ENCODE measurements at regions of chr16 and their contacts with region 1.

Region 1: GRCh38 chr16:6081320-6081976 is 983.9 kb upstream of the EEF2KMT start:
- DNase-seq: peak; percentile 15 to 86
- H3K4me3 ChIP-seq: no peak overlapping the region
- H3K27ac ChIP-seq: no peak overlapping the region
- H3K4me1 ChIP-seq: peaks cover 0 to 2% (median under 1%) of the 10 kb centered on the region in 4 experiments; a peak in 2 of 7 replicates
- H3K27me3 ChIP-seq: no peaks in the 10 kb centered on the region
- CTCF ChIP-seq: peak; percentile 17 to 85 (median 76)
- EP300 ChIP-seq: no peak
- POLR2A ChIP-seq: no peak
- RAD21 ChIP-seq: peak; percentile 84 to 87

Region 2: GRCh38 chr16:5837007-5837670 is 244.3 kb before region 1 on chr16:
- CTCF ChIA-PET with region 1: no interaction called
- POLR2A ChIA-PET with region 1: no interaction called
- DNase-seq: no peak
- H3K4me3 ChIP-seq: no peak overlapping the region
- H3K27ac ChIP-seq: no peak overlapping the region
- H3K4me1 ChIP-seq: peaks cover 0 to 2% (median 1%) of the 10 kb centered on the region in 4 experiments; a peak in 2 of 7 replicates
- H3K27me3 ChIP-seq: no peaks in the 10 kb centered on the region
- CTCF ChIP-seq: no peak
- EP300 ChIP-seq: no peak
- POLR2A ChIP-seq: no peak
- RAD21 ChIP-seq: no peak

Region 3: DNA sequence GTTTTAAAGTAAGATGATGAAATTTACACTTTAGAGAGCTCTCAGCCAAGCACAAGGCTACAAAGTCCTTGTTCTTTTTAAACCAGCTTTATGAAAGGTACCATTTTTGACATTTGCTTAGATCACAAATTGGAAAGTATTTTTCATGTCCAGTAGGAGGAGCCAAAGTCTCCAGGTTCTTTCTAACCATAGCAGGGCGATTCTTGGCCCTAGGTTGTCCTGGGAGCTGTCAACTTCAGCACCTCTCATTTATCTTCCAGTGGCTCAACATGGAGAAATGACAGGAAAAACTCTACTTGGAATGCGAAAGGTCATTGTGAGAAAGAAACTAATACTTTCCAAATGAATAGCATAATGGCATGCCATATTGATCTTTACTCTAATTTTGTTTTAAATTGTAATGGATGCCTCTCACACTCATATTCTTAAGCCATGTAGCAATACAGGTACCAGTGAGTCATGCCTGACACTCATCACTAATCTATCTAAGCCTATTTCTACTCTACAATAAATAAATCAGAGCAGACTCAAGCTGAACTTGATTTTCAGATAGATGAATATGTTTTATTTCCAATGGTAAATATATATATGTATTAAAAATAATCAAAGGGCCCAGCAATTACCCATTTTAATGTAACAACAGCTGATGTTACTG is 64.8 kb before region 1 on chr16:
- CTCF ChIA-PET with region 1: interaction called, 11 read pairs
- POLR2A ChIA-PET with region 1: no interaction called
- DNase-seq: no peak
- H3K4me3 ChIP-seq: no peak overlapping the region
- H3K27ac ChIP-seq: no peak overlapping the region
- H3K4me1 ChIP-seq: peaks cover 0 to 4% (median under 1%) of the 10 kb centered on the region in 4 experiments; a peak in 3 of 7 replicates
- H3K27me3 ChIP-seq: peaks cover 20 to 40% (median 36%) of the 10 kb centered on the region in 4 experiments
- CTCF ChIP-seq: peak in 2 of 3 experiments; percentile 69 to 74; a peak in 3 of 4 replicates
- EP300 ChIP-seq: no peak
- POLR2A ChIP-seq: no peak
- RAD21 ChIP-seq: peak; percentile 77 to 85

Region 4: GRCh38 chr16:6066652-6067051 is 14.8 kb before region 1 on chr16:
- CTCF ChIA-PET with region 1: interaction called, 12 read pairs
- POLR2A ChIA-PET with region 1: no interaction called
- DNase-seq: no peak
- H3K4me3 ChIP-seq: no peak overlapping the region
- H3K27ac ChIP-seq: no peak overlapping the region
- H3K4me1 ChIP-seq: no peaks in the 10 kb centered on the region
- H3K27me3 ChIP-seq: no peaks in the 10 kb centered on the region
- CTCF ChIP-seq: no peak
- EP300 ChIP-seq: no peak
- POLR2A ChIP-seq: no peak
- RAD21 ChIP-seq: no peak

Region 5: GRCh38 chr16:6146874-6147425 is 65.5 kb after region 1 on chr16:
- CTCF ChIA-PET with region 1: interaction called, 13 read pairs
- POLR2A ChIA-PET with region 1: no interaction called
- DNase-seq: peak; percentile 31 to 75
- H3K4me3 ChIP-seq: no peak overlapping the region
- H3K27ac ChIP-seq: no peak overlapping the region
- H3K4me1 ChIP-seq: peaks cover 0 to 8% (median 2%) of the 10 kb centered on the region in 4 experiments; a peak in 2 of 7 replicates
- H3K27me3 ChIP-seq: no peaks in the 10 kb centered on the region
- CTCF ChIP-seq: peak; percentile 36 to 97 (median 81)
- EP300 ChIP-seq: no peak
- POLR2A ChIP-seq: no peak
- RAD21 ChIP-seq: peak; percentile 96 to 98

Region 6: DNA sequence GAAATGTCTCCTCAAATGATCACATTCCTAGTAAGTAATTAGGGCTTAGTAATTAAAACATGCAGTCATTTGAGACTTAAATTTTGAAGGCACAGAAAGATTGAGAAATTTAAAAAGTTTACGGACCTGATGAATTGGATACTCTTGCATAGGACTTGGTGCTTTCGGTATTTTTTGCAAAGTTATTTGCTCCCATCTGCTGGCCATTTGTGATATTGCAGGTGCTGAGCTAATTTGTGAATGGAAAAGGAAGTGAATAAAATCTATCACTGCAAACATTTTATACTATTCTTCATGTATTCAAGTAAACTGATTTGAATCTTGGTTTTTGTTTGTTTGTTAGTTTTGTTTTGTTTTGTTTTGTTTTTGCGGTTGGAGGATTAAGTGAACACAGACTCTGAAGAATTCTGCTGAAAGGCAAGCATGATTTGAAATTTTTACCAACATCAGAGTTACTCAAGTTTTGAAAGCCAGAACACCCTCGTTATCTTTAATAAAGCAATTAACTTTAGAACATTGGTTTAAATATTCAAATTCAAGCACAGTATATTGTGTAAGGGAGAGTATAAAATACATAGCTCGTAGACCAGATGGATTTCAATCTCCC is 561.7 kb after region 1 on chr16:
- CTCF ChIA-PET with region 1: interaction called, 12 read pairs
- POLR2A ChIA-PET with region 1: no interaction called
- DNase-seq: peak in 1 of 2 experiments; percentile 83
- H3K4me3 ChIP-seq: peak overlapping the region in 1 of 4 experiments; percentile 50; a peak in 2 of 8 replicates
- H3K27ac ChIP-seq: no peak overlapping the region
- H3K4me1 ChIP-seq: peaks cover 0 to 6% (median 5%) of the 10 kb centered on the region in 4 experiments; a peak in 4 of 7 replicates
- H3K27me3 ChIP-seq: no peaks in the 10 kb centered on the region
- CTCF ChIP-seq: peak in 2 of 3 experiments; percentile 63 to 74; a peak in 3 of 4 replicates
- EP300 ChIP-seq: no peak
- POLR2A ChIP-seq: no peak
- RAD21 ChIP-seq: peak; percentile 92 to 93

Measured in H1 (cell line).